CD4-positive, alpha-beta memory T cell (primary cell): ENCODE measurements at regions of chr15 and their contacts with region 1.

Region 1: GRCh38 chr15:45457641-45458433 is 64.7 kb downstream of the SLC30A4 start:
- DNase-seq: peak; percentile 79 to 84 (median 81)
- H3K4me3 ChIP-seq: peak overlapping the region; percentile 21 to 51
- H3K4me3 Mint-ChIP-seq: peak overlapping the region; percentile 86 to 94 (median 88)
- H3K27ac ChIP-seq: peak overlapping the region; percentile 61
- H3K27ac Mint-ChIP-seq: peak overlapping the region; percentile 89 to 98 (median 96)
- H3K4me1 ChIP-seq: peaks cover 48% of the 10 kb centered on the region
- H3K4me1 Mint-ChIP-seq: peaks cover 34 to 51% (median 41%) of the 10 kb centered on the region in 4 donors
- H3K27me3 ChIP-seq: no peaks in the 10 kb centered on the region
- H3K27me3 Mint-ChIP-seq: no peaks in the 10 kb centered on the region

Region 2: DNA sequence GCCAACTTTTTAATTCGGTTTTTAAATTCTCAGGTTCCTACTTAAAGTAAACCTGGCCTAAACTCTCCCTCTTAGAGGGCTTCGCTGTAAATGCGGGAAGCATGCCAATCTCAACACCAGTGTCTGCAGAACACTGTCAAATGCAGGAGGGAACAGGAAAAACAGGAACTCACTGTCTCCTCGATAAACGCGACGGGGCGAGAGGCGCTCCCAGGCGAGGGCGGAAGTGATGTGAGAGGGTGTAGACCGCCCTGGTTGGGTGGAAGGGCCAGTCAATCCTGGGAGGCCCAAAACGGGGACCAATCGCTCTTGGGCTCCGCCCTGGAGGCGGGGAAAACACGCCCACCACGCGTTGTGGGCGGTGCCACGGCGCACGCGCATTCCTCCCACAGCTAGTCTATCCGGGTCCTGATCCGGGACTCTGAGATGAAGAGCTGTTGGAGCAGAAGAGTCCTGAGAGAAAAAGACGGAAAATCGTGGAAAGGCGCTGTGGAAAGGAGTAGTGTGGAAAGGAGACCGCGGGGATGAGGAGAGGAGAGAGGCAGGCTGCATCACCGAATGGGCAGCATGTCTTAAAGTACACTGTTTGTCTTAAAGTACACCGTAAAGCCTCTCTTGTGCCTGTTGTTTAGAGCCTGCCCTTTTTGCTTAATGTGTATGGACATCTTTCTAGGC is 178.7 kb before region 1 on chr15:
- CTCF ChIA-PET with region 1: interaction called, 3 read pairs
- POLR2A ChIA-PET with region 1: no interaction called
- intact Hi-C with region 1: loop called (anchors 1 kb)
- DNase-seq: peak; percentile 95 to 99 (median 98)
- H3K4me3 ChIP-seq: peak overlapping the region; percentile 82 to 83
- H3K4me3 Mint-ChIP-seq: peak overlapping the region; percentile 89 to 98 (median 93)
- H3K27ac ChIP-seq: peak overlapping the region; percentile 70
- H3K27ac Mint-ChIP-seq: peak overlapping the region; percentile 87 to 98 (median 96)
- H3K4me1 ChIP-seq: peaks cover 13% of the 10 kb centered on the region
- H3K4me1 Mint-ChIP-seq: peaks cover 7 to 26% (median 16%) of the 10 kb centered on the region in 4 donors
- H3K27me3 ChIP-seq: no peaks in the 10 kb centered on the region
- H3K27me3 Mint-ChIP-seq: no peaks in the 10 kb centered on the region

Region 3: DNA sequence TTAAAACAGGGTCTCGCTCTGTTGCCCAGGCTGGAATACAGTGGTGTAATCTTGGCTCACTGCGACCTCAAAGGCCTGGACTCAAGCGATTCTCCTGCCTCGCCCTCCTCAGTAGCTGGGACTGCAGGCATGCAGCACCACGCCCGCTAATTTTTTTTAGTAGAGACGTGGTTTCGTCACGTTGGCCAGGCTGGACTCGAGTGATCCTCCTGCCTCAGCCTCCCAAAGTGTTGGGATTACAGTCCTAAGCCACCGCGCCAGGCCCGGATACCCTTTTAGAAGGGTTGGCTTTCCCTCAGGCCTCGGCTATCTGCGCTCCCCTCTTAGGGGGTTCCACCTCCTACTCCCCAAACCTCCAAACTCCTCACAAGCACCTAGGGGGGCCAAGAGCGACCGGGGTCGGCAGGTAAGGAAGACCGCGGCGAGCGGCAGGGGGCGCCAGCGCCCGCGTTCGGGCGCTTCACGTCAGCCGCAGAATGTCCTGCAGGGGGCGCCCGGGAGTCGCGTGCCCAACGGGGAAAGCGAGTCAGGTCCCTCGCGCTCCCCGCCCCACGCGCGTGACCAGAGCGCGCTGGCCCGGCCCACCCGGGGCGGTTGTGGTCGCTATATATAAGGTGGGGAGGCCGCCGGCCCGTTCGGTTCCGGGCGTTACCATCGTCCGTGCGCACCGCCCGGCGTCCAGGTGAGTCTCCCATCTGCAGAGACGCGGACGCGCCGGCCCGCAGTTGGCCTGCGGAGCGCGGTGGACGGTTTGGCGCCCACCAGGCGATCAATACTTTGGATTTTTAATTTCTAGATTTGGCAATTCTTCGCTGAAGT is 27.7 kb before region 1 on chr15:
- CTCF ChIA-PET with region 1: interaction called, 137 read pairs
- POLR2A ChIA-PET with region 1: interaction called, 5 read pairs
- intact Hi-C with region 1: loop called (anchors 1 kb)
- DNase-seq: peak; percentile 78 to 84 (median 80)
- H3K4me3 ChIP-seq: peak overlapping the region; percentile 44 to 56
- H3K4me3 Mint-ChIP-seq: peak overlapping the region in 7 of 8 donors; percentile 9 to 70 (median 44)
- H3K27ac ChIP-seq: no peak overlapping the region
- H3K27ac Mint-ChIP-seq: no peak overlapping the region
- H3K4me1 ChIP-seq: peaks cover 12% of the 10 kb centered on the region
- H3K4me1 Mint-ChIP-seq: no peaks in the 10 kb centered on the region
- H3K27me3 ChIP-seq: no peaks in the 10 kb centered on the region
- H3K27me3 Mint-ChIP-seq: peaks cover 0 to 4% of the 10 kb centered on the region in 2 donors

Region 4: GRCh38 chr15:45535486-45536042 is 77.7 kb after region 1 on chr15:
- CTCF ChIA-PET with region 1: no interaction called
- POLR2A ChIA-PET with region 1: no interaction called
- intact Hi-C with region 1: no loop called
- DNase-seq: no peak
- H3K4me3 ChIP-seq: no peak overlapping the region
- H3K4me3 Mint-ChIP-seq: no peak overlapping the region
- H3K27ac ChIP-seq: no peak overlapping the region
- H3K27ac Mint-ChIP-seq: no peak overlapping the region
- H3K4me1 ChIP-seq: no peaks in the 10 kb centered on the region
- H3K4me1 Mint-ChIP-seq: no peaks in the 10 kb centered on the region
- H3K27me3 ChIP-seq: no peaks in the 10 kb centered on the region
- H3K27me3 Mint-ChIP-seq: peaks cover 0 to 3% of the 10 kb centered on the region in 2 donors

Region 5: GRCh38 chr15:45587095-45587860 is 129.4 kb after region 1 on chr15 and contains the start of gene BLOC1S6:
- CTCF ChIA-PET with region 1: interaction called, 9 read pairs
- POLR2A ChIA-PET with region 1: interaction called, 9 read pairs
- intact Hi-C with region 1: loop called (anchors 1 kb)
- DNase-seq: peak; percentile 87 to 91 (median 90)
- H3K4me3 ChIP-seq: peak within 1 kb of the TSS; percentile 89 to 99
- H3K4me3 Mint-ChIP-seq: peak within 1 kb of the TSS; percentile 96 to 100 (median 100)
- H3K27ac ChIP-seq: peak within 1 kb of the TSS; percentile 95
- H3K27ac Mint-ChIP-seq: peak within 1 kb of the TSS; percentile 100
- H3K4me1 ChIP-seq: peaks cover 44% of the 10 kb centered on the region
- H3K4me1 Mint-ChIP-seq: peaks cover 20 to 48% (median 37%) of the 10 kb centered on the region in 4 donors
- H3K27me3 ChIP-seq: no peaks in the 10 kb centered on the region
- H3K27me3 Mint-ChIP-seq: no peaks in the 10 kb centered on the region
- total RNA-seq, gene BLOC1S6: 43.0 to 43.9 TPM